ENCODE measurements at regions of chr5 and their contacts with region 1.

Region 1: GRCh38 chr5:116574367-116575325 is at the start of gene SEMA6A:
- DNase-seq: no peak
- ATAC-seq: peak; percentile 83
- H3K4me3 ChIP-seq: peak within 1 kb of the TSS; percentile 27 to 60
- H3K27ac ChIP-seq: no peak within 1 kb of the TSS
- H3K4me1 ChIP-seq: peaks cover 23% of the 10 kb centered on the region
- H3K27me3 ChIP-seq: peaks cover 49% of the 10 kb centered on the region
- CTCF ChIP-seq: no peak
- total RNA-seq, gene SEMA6A: 0.54 TPM

Region 2: GRCh38 chr5:116428966-116429365 is 145.7 kb before region 1 on chr5:
- CTCF ChIA-PET with region 1: no interaction called
- POLR2A ChIA-PET with region 1: no interaction called
- in situ Hi-C with region 1: no loop called
- intact Hi-C with region 1: no loop called
- DNase-seq: no peak
- ATAC-seq: no peak
- H3K4me3 ChIP-seq: no peak overlapping the region
- H3K27ac ChIP-seq: no peak overlapping the region
- H3K4me1 ChIP-seq: no peaks in the 10 kb centered on the region
- H3K27me3 ChIP-seq: no peaks in the 10 kb centered on the region
- CTCF ChIP-seq: no peak

Region 3: GRCh38 chr5:116947691-116948528 is 373.3 kb after region 1 on chr5:
- CTCF ChIA-PET with region 1: no interaction called
- POLR2A ChIA-PET with region 1: no interaction called
- in situ Hi-C with region 1: no loop called
- intact Hi-C with region 1: loop called (anchors 5 kb)
- DNase-seq: peak; percentile 38
- ATAC-seq: peak; percentile 84
- H3K4me3 ChIP-seq: no peak overlapping the region
- H3K27ac ChIP-seq: no peak overlapping the region
- H3K4me1 ChIP-seq: no peaks in the 10 kb centered on the region
- H3K27me3 ChIP-seq: no peaks in the 10 kb centered on the region
- CTCF ChIP-seq: peak; percentile 71

Measured in Panc1 (cell line).